HCT116 (cell line): ENCODE measurements at regions of chr4 and their contacts with region 1.

Region 1: DNA sequence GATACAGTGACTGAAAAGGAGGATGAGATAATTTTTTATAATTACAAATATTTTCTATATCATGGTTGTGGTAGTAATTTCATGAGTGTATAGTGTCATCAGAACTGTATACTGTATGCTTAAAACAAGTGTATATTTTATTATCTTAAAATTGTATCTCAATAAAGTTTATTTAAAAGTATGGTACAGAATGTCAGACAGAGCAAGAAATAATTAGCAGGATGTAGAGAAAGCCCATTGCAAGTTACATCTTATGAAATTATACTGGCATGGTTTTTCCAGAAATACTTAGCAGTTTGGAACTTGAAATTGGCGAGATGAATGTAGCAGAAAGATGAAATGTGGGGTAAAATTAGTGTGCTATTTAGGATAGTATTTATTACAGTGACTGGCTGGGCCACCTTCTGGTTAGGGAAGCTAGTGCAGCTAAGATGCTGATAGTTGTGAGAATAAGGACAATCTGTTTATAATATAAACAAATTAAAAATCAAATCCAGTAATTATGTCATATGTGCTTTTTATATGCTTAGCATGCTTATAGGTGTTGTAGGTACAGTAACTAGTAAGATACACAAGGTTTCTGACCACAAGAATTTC is 74.7 kb downstream of the IL15 start:
- DNase-seq: no peak
- ATAC-seq: 0 out of 2 replicates have a peak, but pooled peaks have one; percentile 43
- H3K4me3 ChIP-seq: no peak overlapping the region
- H3K27ac ChIP-seq: no peak overlapping the region
- H3K4me1 ChIP-seq: peaks cover 19 to 21% of the 10 kb centered on the region in 2 experiments
- H3K27me3 ChIP-seq: no peaks in the 10 kb centered on the region
- CTCF ChIP-seq: peak; percentile 39 to 64 (median 64); a peak in 5 of 6 replicates
- POLR2A ChIP-seq: no peak
- RAD21 ChIP-seq: peak; percentile 58

Region 2: GRCh38 chr4:141307241-141307689 is 403.8 kb before region 1 on chr4:
- CTCF ChIA-PET with region 1: no interaction called
- POLR2A ChIA-PET with region 1: no interaction called
- RAD21 ChIA-PET with region 1: no interaction called
- intact Hi-C with region 1: loop called (anchors 5 kb)
- DNase-seq: peak; percentile 45
- ATAC-seq: peak; percentile 99
- H3K4me3 ChIP-seq: no peak overlapping the region
- H3K27ac ChIP-seq: no peak overlapping the region
- H3K4me1 ChIP-seq: no peaks in the 10 kb centered on the region
- H3K27me3 ChIP-seq: no peaks in the 10 kb centered on the region
- CTCF ChIP-seq: peak; percentile 52 to 67 (median 53); a peak in 5 of 6 replicates
- POLR2A ChIP-seq: no peak
- RAD21 ChIP-seq: peak; percentile 84

Region 3: DNA sequence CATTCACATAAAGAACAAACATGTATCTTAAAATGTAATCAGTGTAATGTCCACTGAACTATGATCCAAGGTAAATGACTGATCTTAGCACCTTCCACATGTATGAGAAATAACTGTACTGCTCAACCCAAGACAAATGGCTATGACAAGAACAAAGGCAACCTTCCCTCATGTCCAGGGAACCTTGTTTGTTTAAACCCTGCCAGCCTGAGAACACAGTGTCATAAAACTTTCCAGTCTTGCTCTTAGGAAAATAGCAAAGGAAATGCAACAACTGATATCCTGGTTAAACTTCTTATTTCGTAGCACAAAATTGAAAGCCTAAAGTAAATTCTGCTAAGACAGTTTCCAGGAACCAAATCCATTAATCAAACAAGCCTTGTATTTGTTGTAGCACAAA is 419.6 kb after region 1 on chr4:
- CTCF ChIA-PET with region 1: no interaction called
- POLR2A ChIA-PET with region 1: no interaction called
- RAD21 ChIA-PET with region 1: no interaction called
- intact Hi-C with region 1: no loop called
- DNase-seq: no peak
- ATAC-seq: no peak
- H3K4me3 ChIP-seq: no peak overlapping the region
- H3K27ac ChIP-seq: no peak overlapping the region
- H3K4me1 ChIP-seq: 0 out of 4 replicates have a peak, but pooled peaks cover 0 to 3% of the 10 kb centered on the region in 2 experiments
- H3K27me3 ChIP-seq: no peaks in the 10 kb centered on the region
- CTCF ChIP-seq: no peak
- POLR2A ChIP-seq: no peak
- RAD21 ChIP-seq: no peak